H1 (cell line): ENCODE measurements at regions of chr21 and their contacts with region 1.

Region 1: GRCh38 chr21:41612674-41613532 is 104.9 kb upstream of the TMPRSS2 start:
- DNase-seq: peak in 1 of 2 experiments; percentile 88
- H3K4me3 ChIP-seq: peak overlapping the region in 1 of 4 experiments; percentile 6; a peak in 1 of 8 replicates
- H3K27ac ChIP-seq: 0 out of 2 replicates have a peak overlapping the region, but pooled peaks have one; percentile 16
- H3K4me1 ChIP-seq: peaks cover 0 to 13% (median 10%) of the 10 kb centered on the region in 4 experiments; a peak in 5 of 7 replicates
- H3K27me3 ChIP-seq: peaks cover 0 to 2% (median under 1%) of the 10 kb centered on the region in 4 experiments; a peak in 1 of 7 replicates
- CTCF ChIP-seq: peak; percentile 66 to 82 (median 82)
- EP300 ChIP-seq: no peak
- POLR2A ChIP-seq: no peak
- RAD21 ChIP-seq: peak; percentile 86 to 87

Region 2: GRCh38 chr21:41283211-41283818 is 329.6 kb before region 1 on chr21:
- CTCF ChIA-PET with region 1: interaction called, 35 read pairs
- POLR2A ChIA-PET with region 1: no interaction called
- DNase-seq: no peak
- H3K4me3 ChIP-seq: no peak overlapping the region
- H3K27ac ChIP-seq: no peak overlapping the region
- H3K4me1 ChIP-seq: 0 out of 7 replicates have a peak, but pooled peaks cover 0 to 3% (median 0%) of the 10 kb centered on the region in 4 experiments
- H3K27me3 ChIP-seq: no peaks in the 10 kb centered on the region
- CTCF ChIP-seq: peak; percentile 17 to 82 (median 80)
- EP300 ChIP-seq: no peak
- POLR2A ChIP-seq: no peak
- RAD21 ChIP-seq: peak; percentile 95 to 96

Region 3: DNA sequence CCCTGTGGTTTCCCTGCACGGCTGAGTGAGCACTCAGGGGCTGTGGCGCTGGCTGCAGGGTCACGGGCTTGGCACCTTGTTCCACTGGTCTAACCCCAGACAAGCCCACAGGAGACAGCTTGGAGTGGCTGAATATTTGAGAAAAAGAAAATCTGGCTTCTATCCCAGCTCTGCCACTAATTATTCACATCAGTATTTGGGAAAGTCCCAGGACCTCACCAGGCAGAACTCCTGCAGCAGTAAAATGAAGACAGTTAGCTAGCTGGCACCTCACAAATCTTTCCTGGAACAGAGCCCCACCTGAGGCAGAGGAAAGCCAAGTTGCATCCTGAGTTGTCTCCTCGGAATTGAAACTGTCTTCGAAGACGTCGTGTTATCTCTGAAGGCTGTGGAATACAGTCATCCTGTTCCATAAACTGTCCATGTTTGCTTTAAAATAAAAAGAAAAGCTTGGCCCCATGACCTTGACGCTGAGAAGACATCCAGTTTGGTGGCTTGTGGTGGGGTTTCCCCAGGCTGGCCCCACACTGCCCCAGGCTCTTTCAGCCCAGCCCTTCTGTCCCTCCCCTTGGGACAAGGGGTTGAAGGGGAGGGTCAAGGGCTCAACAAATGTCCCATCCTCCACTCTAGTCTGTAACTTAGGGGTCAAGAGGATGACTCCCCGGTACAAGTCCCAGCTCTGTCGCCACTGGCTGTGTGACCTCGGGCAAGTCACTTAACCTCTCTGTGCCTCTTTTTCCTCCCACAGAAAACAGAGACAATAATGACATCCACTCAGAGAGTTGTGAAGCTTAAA is 11.1 kb before region 1 on chr21:
- CTCF ChIA-PET with region 1: interaction called, 19 read pairs
- POLR2A ChIA-PET with region 1: no interaction called
- DNase-seq: no peak
- H3K4me3 ChIP-seq: no peak overlapping the region
- H3K27ac ChIP-seq: no peak overlapping the region
- H3K4me1 ChIP-seq: peaks cover 0 to 15% (median 7%) of the 10 kb centered on the region in 4 experiments; a peak in 4 of 7 replicates
- H3K27me3 ChIP-seq: no peaks in the 10 kb centered on the region
- CTCF ChIP-seq: no peak
- EP300 ChIP-seq: no peak
- POLR2A ChIP-seq: no peak
- RAD21 ChIP-seq: no peak

Region 4: GRCh38 chr21:41663801-41664788 is 51.2 kb after region 1 on chr21:
- CTCF ChIA-PET with region 1: interaction called, 22 read pairs
- POLR2A ChIA-PET with region 1: no interaction called
- DNase-seq: no peak
- H3K4me3 ChIP-seq: no peak overlapping the region
- H3K27ac ChIP-seq: no peak overlapping the region
- H3K4me1 ChIP-seq: no peaks in the 10 kb centered on the region
- H3K27me3 ChIP-seq: no peaks in the 10 kb centered on the region; a peak in 1 of 7 replicates
- CTCF ChIP-seq: peak; percentile 53 to 63 (median 57)
- EP300 ChIP-seq: no peak
- POLR2A ChIP-seq: no peak
- RAD21 ChIP-seq: peak; percentile 65 to 79

Region 5: GRCh38 chr21:41752231-41752681 is 139.4 kb after region 1 on chr21:
- CTCF ChIA-PET with region 1: interaction called, 118 read pairs
- POLR2A ChIA-PET with region 1: no interaction called
- DNase-seq: no peak
- H3K4me3 ChIP-seq: no peak overlapping the region
- H3K27ac ChIP-seq: no peak overlapping the region
- H3K4me1 ChIP-seq: peaks cover 9 to 36% (median 22%) of the 10 kb centered on the region in 4 experiments
- H3K27me3 ChIP-seq: no peaks in the 10 kb centered on the region; a peak in 2 of 7 replicates
- CTCF ChIP-seq: no peak
- EP300 ChIP-seq: no peak
- POLR2A ChIP-seq: no peak
- RAD21 ChIP-seq: no peak

Region 6: GRCh38 chr21:41783441-41784161 is 170.7 kb after region 1 on chr21:
- CTCF ChIA-PET with region 1: interaction called, 82 read pairs
- POLR2A ChIA-PET with region 1: interaction called, 6 read pairs
- DNase-seq: no peak
- H3K4me3 ChIP-seq: no peak overlapping the region
- H3K27ac ChIP-seq: no peak overlapping the region
- H3K4me1 ChIP-seq: peaks cover 2 to 7% (median 4%) of the 10 kb centered on the region in 4 experiments; a peak in 5 of 7 replicates
- H3K27me3 ChIP-seq: no peaks in the 10 kb centered on the region
- CTCF ChIP-seq: no peak
- EP300 ChIP-seq: no peak
- POLR2A ChIP-seq: no peak
- RAD21 ChIP-seq: no peak

Region 7: GRCh38 chr21:41823166-41823565 is 210.3 kb after region 1 on chr21:
- CTCF ChIA-PET with region 1: interaction called, 132 read pairs
- POLR2A ChIA-PET with region 1: no interaction called
- DNase-seq: no peak
- H3K4me3 ChIP-seq: no peak overlapping the region
- H3K27ac ChIP-seq: no peak overlapping the region
- H3K4me1 ChIP-seq: peaks cover 0 to 2% (median 0%) of the 10 kb centered on the region in 4 experiments; a peak in 1 of 7 replicates
- H3K27me3 ChIP-seq: no peaks in the 10 kb centered on the region
- CTCF ChIP-seq: no peak
- EP300 ChIP-seq: no peak
- POLR2A ChIP-seq: no peak
- RAD21 ChIP-seq: no peak